B cell (primary cell): ENCODE measurements at regions of chr1 and their contacts with region 1.

Region 1: DNA sequence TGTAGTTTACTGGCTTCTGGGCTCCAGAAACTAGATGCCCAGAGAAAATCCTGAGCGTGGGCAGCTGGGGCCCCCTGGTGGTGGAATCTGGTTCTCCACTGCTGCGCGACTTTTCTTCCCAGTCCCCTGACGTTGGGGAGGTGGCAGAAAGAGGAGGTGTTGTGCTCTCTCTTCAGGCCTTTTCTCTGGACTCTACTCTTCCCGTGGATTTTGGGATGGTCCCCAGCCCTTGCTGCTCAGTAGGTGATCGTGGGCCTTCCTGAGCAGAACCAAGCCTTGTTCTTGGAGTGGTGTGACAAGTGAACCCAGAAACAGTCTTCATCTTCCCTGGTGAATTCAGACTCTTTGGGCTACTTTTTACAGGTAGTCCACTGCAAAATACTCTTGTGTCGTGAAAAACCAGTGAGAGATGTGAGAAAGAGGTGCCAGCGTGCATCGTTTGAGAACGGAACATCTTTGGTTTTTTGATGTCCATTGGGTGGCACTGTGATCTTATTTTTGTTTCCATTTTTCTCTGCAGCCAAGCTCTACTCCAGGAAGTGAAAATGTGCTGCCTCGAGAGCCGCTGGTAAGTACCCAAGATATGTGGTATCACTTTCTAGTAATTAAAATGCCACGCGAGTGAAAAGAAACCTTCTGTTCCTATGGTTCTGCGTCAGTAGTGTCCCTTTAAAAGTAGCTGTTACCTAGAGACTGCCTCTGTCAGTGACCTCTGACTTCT is 20.2 kb downstream of the PEX14 start:
- DNase-seq: peak; percentile 86
- ATAC-seq: peak; percentile 89
- H3K4me3 ChIP-seq: peak overlapping the region; percentile 36 to 77 (median 62)
- H3K4me3 Mint-ChIP-seq: peak overlapping the region; percentile 89
- H3K27ac ChIP-seq: peak overlapping the region; percentile 87 to 93
- H3K27ac Mint-ChIP-seq: peak overlapping the region; percentile 93
- H3K4me1 ChIP-seq: peaks cover 12 to 18% of the 10 kb centered on the region in 2 donors
- H3K4me1 Mint-ChIP-seq: peaks cover 26% of the 10 kb centered on the region
- H3K27me3 ChIP-seq: no peaks in the 10 kb centered on the region
- H3K27me3 Mint-ChIP-seq: no peaks in the 10 kb centered on the region
- CTCF ChIP-seq: peak; percentile 100

Region 2: GRCh38 chr1:10430216-10431069 is 64.5 kb before region 1 on chr1 and contains the start of gene CENPS:
- CTCF ChIA-PET with region 1: interaction called, 51 read pairs
- POLR2A ChIA-PET with region 1: no interaction called
- intact Hi-C with region 1: no loop called
- DNase-seq: peak; percentile 96
- ATAC-seq: peak; percentile 84
- H3K4me3 ChIP-seq: peak within 1 kb of the TSS; percentile 42 to 98 (median 89)
- H3K4me3 Mint-ChIP-seq: peak within 1 kb of the TSS; percentile 96
- H3K27ac ChIP-seq: peak within 1 kb of the TSS; percentile 82 to 95
- H3K27ac Mint-ChIP-seq: peak within 1 kb of the TSS; percentile 99
- H3K4me1 ChIP-seq: peaks cover 11 to 30% of the 10 kb centered on the region in 2 donors
- H3K4me1 Mint-ChIP-seq: peaks cover 30% of the 10 kb centered on the region
- H3K27me3 ChIP-seq: no peaks in the 10 kb centered on the region
- H3K27me3 Mint-ChIP-seq: no peaks in the 10 kb centered on the region
- CTCF ChIP-seq: peak; percentile 97
- total RNA-seq, gene CENPS: 7.2 and 10.9 TPM in 2 replicates

Region 3: GRCh38 chr1:10479296-10479695 is 15.6 kb before region 1 on chr1:
- CTCF ChIA-PET with region 1: interaction called, 20 read pairs
- POLR2A ChIA-PET with region 1: no interaction called
- intact Hi-C with region 1: loop called (anchors 1 kb)
- DNase-seq: no peak
- ATAC-seq: no peak
- H3K4me3 ChIP-seq: no peak overlapping the region
- H3K4me3 Mint-ChIP-seq: no peak overlapping the region
- H3K27ac ChIP-seq: no peak overlapping the region
- H3K27ac Mint-ChIP-seq: no peak overlapping the region
- H3K4me1 ChIP-seq: peaks cover 13 to 17% of the 10 kb centered on the region in 2 donors
- H3K4me1 Mint-ChIP-seq: peaks cover 25% of the 10 kb centered on the region
- H3K27me3 ChIP-seq: no peaks in the 10 kb centered on the region
- H3K27me3 Mint-ChIP-seq: no peaks in the 10 kb centered on the region
- CTCF ChIP-seq: no peak

Region 4: DNA sequence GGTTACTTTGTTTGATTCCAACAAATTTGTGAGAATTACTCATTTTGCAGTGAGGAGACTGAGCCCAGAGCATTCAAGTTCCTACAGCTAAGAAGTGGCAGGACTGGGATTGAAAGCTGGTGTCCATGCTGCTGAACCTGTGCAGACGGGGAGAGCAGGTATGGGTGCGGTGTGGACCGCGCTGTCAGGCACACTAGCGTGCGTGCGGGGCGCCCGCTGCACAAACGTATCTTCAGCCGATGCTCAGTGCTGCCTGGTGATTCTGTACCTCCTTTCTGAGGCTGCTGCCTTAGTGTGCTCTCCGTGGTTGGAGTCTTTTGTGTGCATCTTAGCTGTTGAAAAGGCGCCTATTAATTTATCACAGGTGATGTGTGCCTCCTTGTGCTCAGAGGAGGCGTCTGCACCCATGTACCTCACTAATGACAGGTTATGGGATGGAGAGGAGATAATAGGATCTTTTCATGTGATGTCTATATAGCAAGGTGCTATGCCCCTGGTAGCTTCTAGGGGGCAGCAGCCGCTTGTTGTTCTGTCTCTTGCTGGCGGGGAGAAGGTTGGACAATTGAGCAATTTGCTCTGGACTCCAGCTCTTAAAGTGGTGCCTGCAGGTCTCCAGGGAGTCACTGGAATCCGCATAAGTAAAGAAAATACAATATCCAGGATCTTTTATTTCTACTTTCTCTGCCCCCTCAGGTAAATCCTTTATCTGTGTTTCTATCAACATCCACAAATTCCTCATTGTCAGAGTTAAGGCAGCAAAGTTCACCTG is 12.4 kb after region 1 on chr1:
- CTCF ChIA-PET with region 1: interaction called, 55 read pairs
- POLR2A ChIA-PET with region 1: no interaction called
- intact Hi-C with region 1: no loop called
- DNase-seq: peak; percentile 58
- ATAC-seq: peak; percentile 68
- H3K4me3 ChIP-seq: no peak overlapping the region
- H3K4me3 Mint-ChIP-seq: no peak overlapping the region
- H3K27ac ChIP-seq: peak overlapping the region in 1 of 2 donors; percentile 2
- H3K27ac Mint-ChIP-seq: peak overlapping the region; percentile 38
- H3K4me1 ChIP-seq: peaks cover 22 to 29% of the 10 kb centered on the region in 2 donors
- H3K4me1 Mint-ChIP-seq: peaks cover 38% of the 10 kb centered on the region
- H3K27me3 ChIP-seq: no peaks in the 10 kb centered on the region
- H3K27me3 Mint-ChIP-seq: no peaks in the 10 kb centered on the region
- CTCF ChIP-seq: peak; percentile 84

Region 5: GRCh38 chr1:10867138-10867721 is 372.3 kb after region 1 on chr1:
- CTCF ChIA-PET with region 1: interaction called, 36 read pairs
- POLR2A ChIA-PET with region 1: no interaction called
- intact Hi-C with region 1: loop called (anchors 1 kb)
- DNase-seq: peak; percentile 67
- ATAC-seq: peak; percentile 72
- H3K4me3 ChIP-seq: peak overlapping the region in 1 of 5 experiments; percentile 25
- H3K4me3 Mint-ChIP-seq: peak overlapping the region; percentile 16
- H3K27ac ChIP-seq: no peak overlapping the region
- H3K27ac Mint-ChIP-seq: no peak overlapping the region
- H3K4me1 ChIP-seq: peaks cover 11 to 14% of the 10 kb centered on the region in 2 donors
- H3K4me1 Mint-ChIP-seq: peaks cover 15% of the 10 kb centered on the region
- H3K27me3 ChIP-seq: peaks cover 0 to 53% (median 17%) of the 10 kb centered on the region in 4 experiments
- H3K27me3 Mint-ChIP-seq: peaks cover 66% of the 10 kb centered on the region
- CTCF ChIP-seq: peak; percentile 80

Region 6: GRCh38 chr1:10941891-10942541 is 447.1 kb after region 1 on chr1:
- CTCF ChIA-PET with region 1: interaction called, 11 read pairs
- POLR2A ChIA-PET with region 1: no interaction called
- intact Hi-C with region 1: loop called (anchors 1 kb)
- DNase-seq: peak; percentile 65
- ATAC-seq: peak; percentile 61
- H3K4me3 ChIP-seq: no peak overlapping the region
- H3K4me3 Mint-ChIP-seq: no peak overlapping the region
- H3K27ac ChIP-seq: no peak overlapping the region
- H3K27ac Mint-ChIP-seq: no peak overlapping the region
- H3K4me1 ChIP-seq: peaks cover 7 to 16% of the 10 kb centered on the region in 2 donors
- H3K4me1 Mint-ChIP-seq: peaks cover 8% of the 10 kb centered on the region
- H3K27me3 ChIP-seq: peaks cover 0 to 31% (median 12%) of the 10 kb centered on the region in 4 experiments
- H3K27me3 Mint-ChIP-seq: peaks cover 46% of the 10 kb centered on the region
- CTCF ChIP-seq: peak; percentile 95